SK-N-SH (cell line): ENCODE measurements at regions of chrX and their contacts with region 1.

Region 1: GRCh38 chrX:129726307-129727111 is 12.3 kb upstream of the XPNPEP2 start:
- DNase-seq: peak; percentile 51
- H3K4me3 ChIP-seq: no peak overlapping the region
- H3K27ac ChIP-seq: no peak overlapping the region
- H3K4me1 ChIP-seq: no peaks in the 10 kb centered on the region; a peak in 1 of 4 replicates
- H3K27me3 ChIP-seq: peaks cover 6% of the 10 kb centered on the region
- CTCF ChIP-seq: peak; percentile 89
- EP300 ChIP-seq: no peak
- RAD21 ChIP-seq: peak; percentile 88

Region 2: GRCh38 chrX:129613596-129613995 is 112.9 kb before region 1 on chrX:
- CTCF ChIA-PET with region 1: interaction called, 24 read pairs
- POLR2A ChIA-PET with region 1: no interaction called
- DNase-seq: no peak
- H3K4me3 ChIP-seq: no peak overlapping the region
- H3K27ac ChIP-seq: no peak overlapping the region
- H3K4me1 ChIP-seq: no peaks in the 10 kb centered on the region
- H3K27me3 ChIP-seq: peaks cover 12% of the 10 kb centered on the region
- CTCF ChIP-seq: no peak
- EP300 ChIP-seq: no peak
- RAD21 ChIP-seq: no peak

Region 3: GRCh38 chrX:129654419-129655165 is 71.9 kb before region 1 on chrX and contains the start of gene APLN:
- CTCF ChIA-PET with region 1: interaction called, 22 read pairs
- POLR2A ChIA-PET with region 1: no interaction called
- DNase-seq: peak; percentile 80
- H3K4me3 ChIP-seq: peak within 1 kb of the TSS; percentile 50 to 61
- H3K27ac ChIP-seq: peak within 1 kb of the TSS in 1 of 2 experiments; percentile 53; a peak in 1 of 4 replicates
- H3K4me1 ChIP-seq: peaks cover 0 to 48% of the 10 kb centered on the region in 2 experiments; a peak in 1 of 4 replicates
- H3K27me3 ChIP-seq: peaks cover 46% of the 10 kb centered on the region
- CTCF ChIP-seq: no peak
- EP300 ChIP-seq: peak in 1 of 2 experiments; percentile 10; a peak in 1 of 4 replicates
- RAD21 ChIP-seq: no peak
- polyA plus RNA-seq, gene APLN: 0.71 and 0.82 TPM in 2 replicates

Region 4: DNA sequence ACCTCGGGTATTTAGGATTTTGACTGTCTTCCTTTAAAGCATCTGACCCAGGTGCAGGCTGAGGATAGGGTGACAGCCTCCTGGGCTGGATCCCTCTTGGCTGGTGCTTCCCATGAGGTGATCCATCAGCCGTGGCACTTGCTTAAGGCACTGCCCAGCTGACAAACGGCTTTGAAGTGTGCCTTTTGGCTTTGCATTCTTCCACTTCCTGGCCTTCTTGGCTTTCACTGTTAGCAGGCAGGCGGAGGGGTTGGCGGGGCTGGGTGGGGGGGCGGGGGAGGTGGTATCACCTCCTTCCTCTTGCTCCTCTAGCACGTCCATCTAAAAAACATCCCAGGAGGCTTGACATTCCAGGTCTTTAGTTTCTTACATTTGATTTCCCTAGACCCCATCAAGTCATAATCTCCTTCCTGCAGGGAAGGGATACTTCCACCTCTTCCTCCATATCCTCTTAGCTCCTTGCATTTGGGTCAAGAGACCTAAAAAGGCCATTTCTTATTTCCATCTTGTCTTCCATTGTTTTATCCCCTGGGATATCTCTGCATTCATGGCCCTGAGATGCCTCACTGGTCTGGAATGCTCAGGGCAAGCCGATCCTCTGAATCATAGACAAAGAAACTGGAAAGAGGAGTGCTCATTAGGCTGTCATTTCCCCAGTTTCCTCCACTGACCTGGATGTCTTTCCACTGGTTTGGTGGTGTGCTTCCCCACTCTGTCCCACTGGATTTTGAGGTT is 60.4 kb before region 1 on chrX:
- CTCF ChIA-PET with region 1: no interaction called
- POLR2A ChIA-PET with region 1: no interaction called
- DNase-seq: no peak
- H3K4me3 ChIP-seq: no peak overlapping the region
- H3K27ac ChIP-seq: peak overlapping the region; percentile 44 to 71; a peak in 3 of 4 replicates
- H3K4me1 ChIP-seq: peaks cover 0 to 13% of the 10 kb centered on the region in 2 experiments; a peak in 1 of 4 replicates
- H3K27me3 ChIP-seq: no peaks in the 10 kb centered on the region
- CTCF ChIP-seq: no peak
- EP300 ChIP-seq: peak in 1 of 2 experiments; percentile 56; a peak in 1 of 4 replicates
- RAD21 ChIP-seq: no peak

Region 5: DNA sequence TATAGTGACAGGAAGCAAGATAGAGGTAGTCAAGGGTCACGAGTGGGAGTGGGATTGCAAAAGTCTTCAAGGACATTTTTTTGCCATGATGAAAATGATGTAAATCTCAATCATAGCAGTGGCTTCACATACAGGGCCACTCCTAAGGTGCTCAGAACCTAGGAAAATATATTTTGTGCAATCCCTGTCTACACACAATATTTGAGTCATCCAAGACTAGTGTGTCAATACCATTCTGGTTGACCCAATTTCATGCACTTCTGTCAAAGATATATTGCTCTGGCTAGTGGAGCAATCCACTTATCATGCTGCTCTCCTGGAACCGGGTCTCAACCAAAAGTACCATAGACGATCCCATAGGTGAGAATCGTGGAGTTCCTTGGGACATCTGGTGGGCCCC is 11.9 kb before region 1 on chrX:
- CTCF ChIA-PET with region 1: interaction called, 17 read pairs
- POLR2A ChIA-PET with region 1: no interaction called
- DNase-seq: no peak
- H3K4me3 ChIP-seq: no peak overlapping the region
- H3K27ac ChIP-seq: no peak overlapping the region
- H3K4me1 ChIP-seq: no peaks in the 10 kb centered on the region
- H3K27me3 ChIP-seq: no peaks in the 10 kb centered on the region; the same call in 1 of the 2 replicates
- CTCF ChIP-seq: no peak
- EP300 ChIP-seq: no peak
- RAD21 ChIP-seq: no peak